KBM-7 (cell line): ENCODE measurements at regions of chr5 and their contacts with region 1.

Region 1: GRCh38 chr5:137629646-137630045 is 106.2 kb downstream of the KLHL3 start:
- DNase-seq: peak; percentile 36

Region 2: GRCh38 chr5:137186759-137187461 is 442.7 kb before region 1 on chr5:
- in situ Hi-C with region 1: no loop called
- DNase-seq: no peak

Region 3: DNA sequence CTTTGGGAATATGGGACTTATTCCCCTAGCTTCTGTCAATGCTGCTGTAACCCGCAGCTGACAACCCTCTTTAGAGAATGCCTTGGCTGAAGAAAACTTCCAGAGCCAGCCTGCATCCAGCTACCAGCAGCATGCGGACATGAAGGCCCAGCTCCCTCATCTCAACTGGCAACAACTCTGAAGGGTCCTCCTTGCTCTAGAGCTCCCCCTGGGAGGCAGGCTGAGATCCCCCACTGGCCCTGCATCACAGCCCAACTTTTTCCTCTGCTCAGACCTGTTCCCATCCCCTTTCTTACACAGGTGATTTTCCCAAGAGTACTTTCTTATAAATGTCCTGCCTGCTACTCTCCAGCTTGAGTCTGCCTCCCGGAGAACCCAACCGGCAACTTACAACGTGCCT is 435.5 kb after region 1 on chr5:
- in situ Hi-C with region 1: loop called (anchors 25 kb)
- DNase-seq: no peak

Region 4: DNA sequence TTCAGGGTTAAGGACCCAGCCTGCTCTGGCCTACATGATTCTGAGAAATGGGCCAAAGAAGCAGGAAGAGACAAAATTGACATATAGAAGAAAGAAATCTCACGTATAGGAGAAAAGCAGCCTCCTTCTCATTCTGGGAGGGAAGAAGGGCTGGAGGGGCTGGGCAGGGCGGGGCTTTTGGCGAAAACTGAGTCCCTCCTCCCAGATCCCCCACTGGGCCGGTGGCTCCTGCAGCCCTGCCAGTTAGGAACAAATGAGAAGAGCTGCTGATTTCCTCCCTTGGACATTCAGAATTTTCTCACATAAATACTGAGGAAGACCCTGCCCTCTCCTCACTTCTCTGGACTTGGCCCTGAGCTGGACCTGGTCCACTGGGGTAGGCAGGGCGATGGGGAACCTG is 454.1 kb after region 1 on chr5 and contains the start of gene WNT8A:
- in situ Hi-C with region 1: no loop called
- DNase-seq: no peak